Activated B cell treated with CpG ODN at 0.5 μM for 24 hours (primary cell): ENCODE measurements at regions of chr2 and their contacts with region 1.

Region 1: GRCh38 chr2:17821535-17822444 is 5.5 kb downstream of the MSGN1 start:
- DNase-seq: no peak
- ATAC-seq: peak; percentile 29
- H3K4me3 Mint-ChIP-seq: peak overlapping the region; percentile 42
- H3K27ac Mint-ChIP-seq: peak overlapping the region; percentile 88
- H3K4me1 Mint-ChIP-seq: peaks cover 84% of the 10 kb centered on the region
- H3K27me3 Mint-ChIP-seq: no peaks in the 10 kb centered on the region
- CTCF ChIP-seq: no peak

Region 2: GRCh38 chr2:17804358-17804757 is 17.4 kb before region 1 on chr2:
- CTCF ChIA-PET with region 1: no interaction called
- POLR2A ChIA-PET with region 1: interaction called, 172 read pairs
- intact Hi-C with region 1: loop called (anchors 1 kb)
- DNase-seq: no peak
- ATAC-seq: peak; percentile 82
- H3K4me3 Mint-ChIP-seq: peak overlapping the region; percentile 76
- H3K27ac Mint-ChIP-seq: peak overlapping the region; percentile 97
- H3K4me1 Mint-ChIP-seq: peaks cover 84% of the 10 kb centered on the region
- H3K27me3 Mint-ChIP-seq: no peaks in the 10 kb centered on the region
- CTCF ChIP-seq: no peak